Mammary epithelial cell (primary cell): ENCODE measurements at regions of chr10 and their contacts with region 1.

Region 1: DNA sequence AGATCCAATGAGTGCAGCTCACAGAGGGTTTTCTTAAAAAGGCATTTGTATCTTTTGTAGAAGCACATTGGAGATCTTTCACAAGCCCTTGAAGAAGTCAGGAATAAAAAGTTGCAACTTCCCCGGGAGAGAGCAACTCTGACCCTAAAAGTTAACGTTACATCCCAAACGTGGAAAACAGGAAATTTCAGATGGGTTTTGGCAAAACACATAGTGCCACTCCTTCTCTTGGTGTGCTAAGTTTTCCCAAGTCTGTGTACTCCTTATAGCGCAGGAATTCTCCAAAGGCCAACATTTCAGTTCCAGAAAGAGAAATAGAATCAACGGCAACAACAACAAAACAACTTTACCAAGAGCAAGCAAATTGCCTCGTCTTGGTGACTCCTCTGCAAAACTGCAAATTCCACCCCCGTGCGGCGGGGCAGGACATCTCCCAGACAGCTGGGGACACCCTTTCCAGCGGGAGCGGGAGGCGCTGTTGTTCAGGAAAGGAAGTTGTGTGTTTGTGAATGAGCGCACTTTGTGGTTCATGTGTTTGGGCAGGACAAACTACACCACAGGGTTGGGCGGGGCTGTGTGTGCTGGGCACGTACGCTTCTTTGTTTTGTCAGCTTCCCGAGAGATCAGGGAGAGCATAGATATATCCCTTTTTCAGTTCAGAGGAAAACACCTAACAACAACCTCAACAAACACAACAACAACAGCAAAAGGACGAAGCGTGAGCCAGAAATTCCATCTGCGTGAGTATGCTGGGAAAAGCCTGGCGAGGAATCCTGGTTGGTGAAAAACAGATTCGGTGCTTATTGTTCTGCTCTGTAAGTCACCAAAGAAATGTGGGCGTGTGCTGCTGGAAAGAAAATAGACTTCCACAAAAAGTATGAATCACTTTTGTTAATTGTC is 294.7 kb upstream of the PITRM1 start:
- DNase-seq: peak; percentile 97
- H3K4me3 ChIP-seq: peak overlapping the region in 2 of 3 experiments; percentile 14 to 27
- H3K27ac ChIP-seq: peak overlapping the region; percentile 100
- H3K4me1 ChIP-seq: peaks cover 35% of the 10 kb centered on the region
- H3K27me3 ChIP-seq: no peaks in the 10 kb centered on the region
- CTCF ChIP-seq: peak; percentile 17 to 54

Region 2: GRCh38 chr10:3197348-3198003 is 269.8 kb before region 1 on chr10:
- CTCF ChIA-PET with region 1: no interaction called
- dilution Hi-C with region 1: no loop called
- in situ Hi-C with region 1: no loop called
- intact Hi-C with region 1: loop called (anchors 10 kb)
- DNase-seq: peak; percentile 77
- H3K4me3 ChIP-seq: peak overlapping the region; percentile 28 to 45 (median 30)
- H3K27ac ChIP-seq: no peak overlapping the region
- H3K4me1 ChIP-seq: peaks cover 16% of the 10 kb centered on the region
- H3K27me3 ChIP-seq: peaks cover 12% of the 10 kb centered on the region
- CTCF ChIP-seq: peak; percentile 71 to 98

Region 3: GRCh38 chr10:3482200-3483138 is 15.2 kb after region 1 on chr10:
- CTCF ChIA-PET with region 1: no interaction called
- dilution Hi-C with region 1: no loop called
- in situ Hi-C with region 1: no loop called
- intact Hi-C with region 1: loop called (anchors 1 kb)
- DNase-seq: peak; percentile 98
- H3K4me3 ChIP-seq: peak overlapping the region in 2 of 3 experiments; percentile 1 to 27
- H3K27ac ChIP-seq: peak overlapping the region; percentile 61
- H3K4me1 ChIP-seq: peaks cover 32% of the 10 kb centered on the region
- H3K27me3 ChIP-seq: no peaks in the 10 kb centered on the region
- CTCF ChIP-seq: no peak

Region 4: GRCh38 chr10:3542185-3542611 is 74.9 kb after region 1 on chr10:
- CTCF ChIA-PET with region 1: no interaction called
- dilution Hi-C with region 1: no loop called
- in situ Hi-C with region 1: no loop called
- intact Hi-C with region 1: loop called (anchors 5 kb)
- DNase-seq: peak; percentile 65
- H3K4me3 ChIP-seq: no peak overlapping the region
- H3K27ac ChIP-seq: no peak overlapping the region
- H3K4me1 ChIP-seq: peaks cover 13% of the 10 kb centered on the region
- H3K27me3 ChIP-seq: no peaks in the 10 kb centered on the region
- CTCF ChIP-seq: no peak

Region 5: DNA sequence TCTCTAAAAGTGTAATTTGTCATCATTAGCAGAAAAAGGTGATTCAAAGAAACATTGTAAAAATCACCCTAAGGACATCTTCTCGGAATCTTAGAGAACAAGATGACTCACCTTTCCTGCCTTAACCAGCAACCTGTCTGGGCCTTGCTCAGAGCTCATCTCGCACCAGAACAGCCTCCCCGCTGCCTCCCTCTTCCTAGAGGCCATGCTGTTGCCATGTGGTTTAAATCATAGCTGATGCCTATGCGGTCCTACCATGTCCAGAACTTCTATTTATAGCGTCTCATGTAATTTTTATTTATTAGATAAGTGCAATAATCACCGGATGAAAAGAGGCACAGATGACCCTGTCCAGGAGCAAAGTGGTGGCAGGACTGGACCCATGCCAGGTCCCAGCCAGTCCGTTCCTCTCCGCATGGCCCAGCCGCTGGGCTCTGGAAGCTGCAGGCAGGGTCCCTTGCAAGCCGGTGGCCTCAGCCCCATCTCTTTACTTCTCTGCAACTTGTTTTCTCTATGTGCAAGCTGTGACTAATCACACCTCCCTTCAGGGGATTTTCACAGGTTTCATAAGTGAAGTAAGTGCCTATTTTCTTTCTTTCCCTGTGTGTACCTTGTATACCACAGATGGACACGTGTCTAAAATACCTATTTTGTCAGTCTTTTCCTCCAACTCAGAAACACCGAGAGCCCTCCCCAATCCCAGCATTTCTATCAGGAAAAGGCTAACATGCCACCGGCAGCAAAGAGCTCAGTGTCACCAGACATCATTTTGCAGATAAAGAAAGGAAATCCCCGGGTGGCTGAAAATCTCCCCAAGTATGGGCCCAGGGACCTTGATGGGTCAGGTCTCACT is 290.6 kb after region 1 on chr10:
- CTCF ChIA-PET with region 1: no interaction called
- dilution Hi-C with region 1: no loop called
- in situ Hi-C with region 1: loop called in 1 of 2 experiments (anchors 5 kb)
- intact Hi-C with region 1: loop called (anchors 5 kb)
- DNase-seq: peak; percentile 96
- H3K4me3 ChIP-seq: no peak overlapping the region
- H3K27ac ChIP-seq: peak overlapping the region; percentile 90
- H3K4me1 ChIP-seq: peaks cover 60% of the 10 kb centered on the region
- H3K27me3 ChIP-seq: no peaks in the 10 kb centered on the region
- CTCF ChIP-seq: no peak

Region 6: GRCh38 chr10:4663162-4663904 is 1196.0 kb after region 1 on chr10:
- CTCF ChIA-PET with region 1: no interaction called
- dilution Hi-C with region 1: no loop called
- in situ Hi-C with region 1: loop called in 1 of 2 experiments (anchors 25 kb)
- intact Hi-C with region 1: no loop called
- DNase-seq: peak; percentile 99
- H3K4me3 ChIP-seq: no peak overlapping the region
- H3K27ac ChIP-seq: peak overlapping the region; percentile 100
- H3K4me1 ChIP-seq: peaks cover 28% of the 10 kb centered on the region
- H3K27me3 ChIP-seq: no peaks in the 10 kb centered on the region
- CTCF ChIP-seq: no peak